SK-N-SH (cell line): ENCODE measurements at regions of chr7 and their contacts with region 1.

Region 1: GRCh38 chr7:87797798-87798403 is 78.3 kb downstream of the SLC25A40 start:
- DNase-seq: peak; percentile 47
- H3K4me3 ChIP-seq: no peak overlapping the region; a peak in 1 of 4 replicates
- H3K27ac ChIP-seq: no peak overlapping the region
- H3K4me1 ChIP-seq: no peaks in the 10 kb centered on the region
- H3K27me3 ChIP-seq: no peaks in the 10 kb centered on the region
- CTCF ChIP-seq: peak; percentile 80
- EP300 ChIP-seq: no peak
- RAD21 ChIP-seq: peak; percentile 96

Region 2: DNA sequence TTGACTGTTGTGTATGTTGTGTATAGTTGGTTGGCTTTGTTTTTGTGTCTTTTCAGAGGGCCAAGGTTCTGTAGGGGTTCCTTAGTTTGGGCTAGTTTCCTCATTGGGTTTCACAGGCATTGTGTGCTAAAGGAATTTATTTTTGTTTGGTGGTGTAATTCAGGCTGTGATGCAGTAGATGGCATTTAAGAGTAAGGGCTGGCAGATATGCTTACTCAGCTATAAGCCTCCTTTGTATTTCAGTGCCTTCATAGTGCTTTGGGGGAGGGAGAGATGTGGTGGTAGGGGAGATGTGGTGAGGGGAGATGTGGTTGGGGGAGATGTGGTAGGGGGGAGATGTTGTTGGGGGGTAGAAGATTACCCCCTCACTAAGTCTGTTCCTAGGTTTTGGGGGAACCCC is 13.5 kb before region 1 on chr7:
- CTCF ChIA-PET with region 1: interaction called, 19 read pairs
- POLR2A ChIA-PET with region 1: no interaction called
- DNase-seq: no peak
- H3K4me3 ChIP-seq: no peak overlapping the region
- H3K27ac ChIP-seq: no peak overlapping the region
- H3K4me1 ChIP-seq: no peaks in the 10 kb centered on the region
- H3K27me3 ChIP-seq: no peaks in the 10 kb centered on the region
- CTCF ChIP-seq: peak; percentile 19; the same call in 1 of the 2 replicates
- EP300 ChIP-seq: no peak
- RAD21 ChIP-seq: 0 out of 2 replicates have a peak, but pooled peaks have one; percentile 16

Region 3: GRCh38 chr7:87816389-87816788 is 18.5 kb after region 1 on chr7:
- CTCF ChIA-PET with region 1: interaction called, 15 read pairs
- POLR2A ChIA-PET with region 1: no interaction called
- DNase-seq: no peak
- H3K4me3 ChIP-seq: no peak overlapping the region
- H3K27ac ChIP-seq: no peak overlapping the region
- H3K4me1 ChIP-seq: no peaks in the 10 kb centered on the region
- H3K27me3 ChIP-seq: no peaks in the 10 kb centered on the region
- CTCF ChIP-seq: no peak
- EP300 ChIP-seq: no peak
- RAD21 ChIP-seq: no peak

Region 4: GRCh38 chr7:88111136-88111743 is 313.3 kb after region 1 on chr7:
- CTCF ChIA-PET with region 1: interaction called, 23 read pairs
- POLR2A ChIA-PET with region 1: no interaction called
- DNase-seq: peak; percentile 36
- H3K4me3 ChIP-seq: no peak overlapping the region
- H3K27ac ChIP-seq: no peak overlapping the region
- H3K4me1 ChIP-seq: peaks cover 0 to 9% of the 10 kb centered on the region in 2 experiments; a peak in 2 of 4 replicates
- H3K27me3 ChIP-seq: no peaks in the 10 kb centered on the region
- CTCF ChIP-seq: peak; percentile 92
- EP300 ChIP-seq: no peak
- RAD21 ChIP-seq: peak; percentile 98